ENCODE measurements at regions of chr9 and their contacts with region 1.

Region 1: GRCh38 chr9:124852829-124853531 is at the start of gene WDR38:
- DNase-seq: peak; percentile 80
- ATAC-seq: peak; percentile 60
- H3K4me3 Mint-ChIP-seq: peak within 1 kb of the TSS; percentile 62
- H3K27ac Mint-ChIP-seq: no peak within 1 kb of the TSS; the same call in 1 of the 2 replicates
- H3K4me1 Mint-ChIP-seq: peaks cover 9% of the 10 kb centered on the region
- H3K27me3 Mint-ChIP-seq: no peaks in the 10 kb centered on the region
- CTCF ChIP-seq: peak; percentile 97
- total RNA-seq, gene WDR38: not detected in 3 replicates

Region 2: DNA sequence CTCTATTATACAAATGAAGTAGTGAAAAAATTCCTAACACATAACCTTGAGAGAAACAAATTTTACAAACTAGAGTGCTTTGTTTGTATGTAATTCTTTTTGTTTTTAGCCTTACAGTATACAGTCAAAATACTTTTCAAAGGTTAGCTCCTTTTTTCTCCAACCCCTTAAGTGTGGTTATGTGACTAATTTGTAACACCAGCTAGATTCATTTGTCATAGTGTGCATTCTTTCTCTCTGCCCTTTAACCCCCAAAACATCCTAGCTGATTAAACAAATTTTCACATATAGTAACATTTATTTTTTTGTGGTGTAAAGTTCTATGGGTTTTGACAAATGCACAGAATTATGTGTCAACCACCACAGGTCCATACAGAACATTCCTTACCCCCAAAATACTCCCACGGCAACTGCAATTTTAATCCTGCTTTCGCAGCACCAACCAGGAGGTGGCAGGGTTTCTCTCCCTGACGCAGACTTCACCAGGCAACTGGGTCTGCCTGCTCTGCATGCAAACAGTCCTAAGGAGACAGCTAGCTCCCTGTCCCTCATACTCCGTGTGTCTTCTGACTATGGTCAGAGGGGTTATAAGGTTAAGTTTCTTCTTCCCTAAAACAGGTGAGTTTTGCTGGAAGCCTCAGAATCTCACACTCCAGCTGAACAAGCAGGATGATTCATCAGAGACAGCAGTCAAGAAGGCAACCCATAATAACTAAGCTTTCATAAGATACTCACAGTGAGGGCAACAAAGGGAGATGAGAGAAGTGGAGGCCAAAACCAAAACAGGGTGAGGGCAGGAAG is 301.3 kb before region 1 on chr9:
- CTCF ChIA-PET with region 1: interaction called, 10 read pairs
- POLR2A ChIA-PET with region 1: no interaction called
- DNase-seq: peak; percentile 77
- ATAC-seq: peak; percentile 98
- H3K4me3 Mint-ChIP-seq: no peak overlapping the region
- H3K27ac Mint-ChIP-seq: no peak overlapping the region
- H3K4me1 Mint-ChIP-seq: peaks cover 13% of the 10 kb centered on the region
- H3K27me3 Mint-ChIP-seq: no peaks in the 10 kb centered on the region
- CTCF ChIP-seq: peak; percentile 23; the same call in 1 of the 2 replicates

Region 3: GRCh38 chr9:124764774-124765438 is 88.1 kb before region 1 on chr9:
- CTCF ChIA-PET with region 1: interaction called, 935 read pairs
- POLR2A ChIA-PET with region 1: interaction called, 14 read pairs
- DNase-seq: no peak
- ATAC-seq: 0 out of 2 replicates have a peak, but pooled peaks have one; percentile 12
- H3K4me3 Mint-ChIP-seq: peak overlapping the region; percentile 47
- H3K27ac Mint-ChIP-seq: 0 out of 2 replicates have a peak overlapping the region, but pooled peaks have one; percentile 46
- H3K4me1 Mint-ChIP-seq: peaks cover 93% of the 10 kb centered on the region
- H3K27me3 Mint-ChIP-seq: no peaks in the 10 kb centered on the region; the same call in none of the 2 replicates
- CTCF ChIP-seq: no peak

Region 4: GRCh38 chr9:124794902-124795491 is 58.0 kb before region 1 on chr9:
- CTCF ChIA-PET with region 1: interaction called, 44 read pairs
- POLR2A ChIA-PET with region 1: no interaction called
- DNase-seq: no peak
- ATAC-seq: peak; percentile 35; the same call in 1 of the 2 replicates
- H3K4me3 Mint-ChIP-seq: no peak overlapping the region
- H3K27ac Mint-ChIP-seq: no peak overlapping the region
- H3K4me1 Mint-ChIP-seq: 0 out of 2 replicates have a peak, but pooled peaks cover 4% of the 10 kb centered on the region
- H3K27me3 Mint-ChIP-seq: no peaks in the 10 kb centered on the region
- CTCF ChIP-seq: no peak

Region 5: DNA sequence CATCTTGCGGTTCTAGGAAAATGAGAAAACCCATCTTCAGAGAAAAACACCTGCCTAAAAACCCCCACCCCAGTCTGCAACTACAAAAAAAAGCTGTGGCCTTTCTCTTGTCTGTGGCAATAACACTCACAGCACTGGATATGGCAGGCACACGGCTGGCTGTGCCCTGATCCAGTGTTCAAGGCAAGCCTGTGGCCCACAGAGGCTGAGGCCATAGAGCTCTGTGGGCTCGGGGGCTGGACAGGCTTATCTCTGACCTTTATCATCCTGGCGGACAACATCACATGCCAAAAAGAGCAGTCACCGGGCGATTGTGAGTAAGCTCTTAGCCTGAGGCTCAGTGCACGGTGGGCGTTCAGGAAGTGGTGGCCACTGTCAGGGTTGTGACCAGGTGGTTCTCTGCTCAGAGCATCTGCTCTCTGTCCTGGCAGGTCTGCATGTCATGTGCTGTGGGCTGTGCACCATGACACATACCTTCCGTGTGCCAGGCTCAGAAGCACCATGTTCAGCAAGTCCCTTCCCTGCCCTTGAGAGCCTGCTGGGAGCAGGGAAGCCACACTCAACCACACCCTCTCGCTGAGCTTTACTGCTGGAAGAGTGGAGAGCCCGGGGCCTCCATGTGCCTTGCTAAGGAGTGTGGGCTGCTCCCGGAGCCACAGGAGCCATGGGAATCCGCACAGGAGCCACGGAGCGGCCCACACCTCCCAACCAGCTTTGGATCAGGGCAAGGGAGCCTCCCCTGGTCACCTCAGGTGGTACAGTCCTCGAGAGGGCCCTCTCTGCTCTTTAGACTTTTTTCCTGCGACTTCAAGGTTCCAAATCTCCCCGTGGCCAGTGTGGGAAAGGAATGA is 34.3 kb before region 1 on chr9:
- CTCF ChIA-PET with region 1: interaction called, 58 read pairs
- POLR2A ChIA-PET with region 1: no interaction called
- DNase-seq: peak; percentile 57
- ATAC-seq: peak; percentile 91
- H3K4me3 Mint-ChIP-seq: no peak overlapping the region
- H3K27ac Mint-ChIP-seq: no peak overlapping the region
- H3K4me1 Mint-ChIP-seq: peaks cover 12% of the 10 kb centered on the region
- H3K27me3 Mint-ChIP-seq: no peaks in the 10 kb centered on the region
- CTCF ChIP-seq: no peak

Region 6: GRCh38 chr9:124880501-124880900 is 27.5 kb after region 1 on chr9:
- CTCF ChIA-PET with region 1: interaction called, 40 read pairs
- POLR2A ChIA-PET with region 1: interaction called, 7 read pairs
- DNase-seq: peak; percentile 67
- ATAC-seq: peak; percentile 82
- H3K4me3 Mint-ChIP-seq: peak overlapping the region; percentile 10; the same call in 1 of the 2 replicates
- H3K27ac Mint-ChIP-seq: no peak overlapping the region
- H3K4me1 Mint-ChIP-seq: peaks cover 48% of the 10 kb centered on the region
- H3K27me3 Mint-ChIP-seq: no peaks in the 10 kb centered on the region
- CTCF ChIP-seq: no peak

Region 7: DNA sequence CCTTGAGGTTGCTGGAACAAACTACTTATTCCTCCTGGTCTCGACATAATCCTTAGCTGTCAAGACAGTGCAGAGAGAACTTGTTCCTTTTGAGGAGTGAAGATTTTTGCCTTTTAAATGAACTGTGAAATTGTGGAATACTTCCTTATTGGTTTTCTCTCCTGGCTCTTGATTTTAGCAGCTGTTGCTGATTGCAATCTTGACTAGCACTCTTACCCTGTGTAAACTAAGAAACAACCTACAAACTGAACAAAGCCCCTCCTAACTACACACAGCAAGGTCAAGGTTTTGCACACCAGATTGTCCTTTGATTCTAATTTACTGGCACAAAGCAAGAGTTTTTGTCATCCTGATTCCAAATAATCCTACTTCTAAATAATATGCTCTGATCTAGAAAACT is 171.9 kb after region 1 on chr9:
- CTCF ChIA-PET with region 1: no interaction called
- POLR2A ChIA-PET with region 1: no interaction called
- DNase-seq: no peak
- ATAC-seq: no peak
- H3K4me3 Mint-ChIP-seq: no peak overlapping the region
- H3K27ac Mint-ChIP-seq: no peak overlapping the region
- H3K4me1 Mint-ChIP-seq: 0 out of 2 replicates have a peak, but pooled peaks cover 3% of the 10 kb centered on the region
- H3K27me3 Mint-ChIP-seq: no peaks in the 10 kb centered on the region
- CTCF ChIP-seq: no peak

Measured in WTC11 (cell line).